CD14-positive monocyte (primary cell): ENCODE measurements at regions of chr12 and their contacts with region 1.

Region 1: GRCh38 chr12:49288412-49288853 is 6.5 kb upstream of the PRPH start:
- DNase-seq: peak; percentile 53 to 68 (median 65)
- H3K4me3 ChIP-seq: no peak overlapping the region
- H3K4me3 Mint-ChIP-seq: peak overlapping the region in 1 of 2 donors; percentile 62
- H3K27ac ChIP-seq: no peak overlapping the region
- H3K27ac Mint-ChIP-seq: no peak overlapping the region
- H3K4me1 ChIP-seq: no peaks in the 10 kb centered on the region
- H3K4me1 Mint-ChIP-seq: no peaks in the 10 kb centered on the region
- H3K27me3 ChIP-seq: peaks cover 6 to 31% of the 10 kb centered on the region in 2 donors
- H3K27me3 Mint-ChIP-seq: peaks cover 20 to 75% (median 43%) of the 10 kb centered on the region in 3 donors
- CTCF ChIP-seq: peak; percentile 92

Region 2: GRCh38 chr12:49336645-49337584 is 48.5 kb after region 1 on chr12 and contains the start of gene C1QL4:
- intact Hi-C with region 1: loop called (anchors 1 to 2 kb)
- DNase-seq: peak; percentile 69 to 75 (median 73)
- H3K4me3 ChIP-seq: peak within 1 kb of the TSS; percentile 5 to 69 (median 24)
- H3K4me3 Mint-ChIP-seq: peak within 1 kb of the TSS; percentile 62 to 88
- H3K27ac ChIP-seq: no peak within 1 kb of the TSS
- H3K27ac Mint-ChIP-seq: no peak within 1 kb of the TSS
- H3K4me1 ChIP-seq: peaks cover 13 to 24% of the 10 kb centered on the region in 2 donors
- H3K4me1 Mint-ChIP-seq: peaks cover 34% of the 10 kb centered on the region
- H3K27me3 ChIP-seq: peaks cover 82 to 99% of the 10 kb centered on the region in 2 donors
- H3K27me3 Mint-ChIP-seq: peaks cover 95 to 100% (median 96%) of the 10 kb centered on the region in 3 donors
- CTCF ChIP-seq: peak; percentile 99
- polyA plus RNA-seq, gene C1QL4: not detected

Region 3: GRCh38 chr12:49342066-49342913 is 53.9 kb after region 1 on chr12:
- intact Hi-C with region 1: loop called (anchors 1 to 2 kb)
- DNase-seq: peak; percentile 53 to 74 (median 66)
- H3K4me3 ChIP-seq: peak overlapping the region; percentile 37 to 83 (median 40)
- H3K4me3 Mint-ChIP-seq: peak overlapping the region; percentile 76 to 92
- H3K27ac ChIP-seq: no peak overlapping the region
- H3K27ac Mint-ChIP-seq: no peak overlapping the region
- H3K4me1 ChIP-seq: peaks cover 39 to 48% of the 10 kb centered on the region in 2 donors
- H3K4me1 Mint-ChIP-seq: peaks cover 45% of the 10 kb centered on the region
- H3K27me3 ChIP-seq: peaks cover 82 to 99% of the 10 kb centered on the region in 2 donors
- H3K27me3 Mint-ChIP-seq: peaks cover 93 to 100% (median 98%) of the 10 kb centered on the region in 3 donors
- CTCF ChIP-seq: peak; percentile 99

Region 4: GRCh38 chr12:49403971-49404450 is 115.6 kb after region 1 on chr12:
- intact Hi-C with region 1: no loop called
- DNase-seq: no peak
- H3K4me3 ChIP-seq: no peak overlapping the region
- H3K4me3 Mint-ChIP-seq: no peak overlapping the region
- H3K27ac ChIP-seq: no peak overlapping the region
- H3K27ac Mint-ChIP-seq: no peak overlapping the region
- H3K4me1 ChIP-seq: no peaks in the 10 kb centered on the region
- H3K4me1 Mint-ChIP-seq: no peaks in the 10 kb centered on the region
- H3K27me3 ChIP-seq: no peaks in the 10 kb centered on the region
- H3K27me3 Mint-ChIP-seq: peaks cover 0 to 1% (median 0%) of the 10 kb centered on the region in 3 donors
- CTCF ChIP-seq: no peak